ENCODE measurements at regions of chr19 and their contacts with region 1.

Region 1: DNA sequence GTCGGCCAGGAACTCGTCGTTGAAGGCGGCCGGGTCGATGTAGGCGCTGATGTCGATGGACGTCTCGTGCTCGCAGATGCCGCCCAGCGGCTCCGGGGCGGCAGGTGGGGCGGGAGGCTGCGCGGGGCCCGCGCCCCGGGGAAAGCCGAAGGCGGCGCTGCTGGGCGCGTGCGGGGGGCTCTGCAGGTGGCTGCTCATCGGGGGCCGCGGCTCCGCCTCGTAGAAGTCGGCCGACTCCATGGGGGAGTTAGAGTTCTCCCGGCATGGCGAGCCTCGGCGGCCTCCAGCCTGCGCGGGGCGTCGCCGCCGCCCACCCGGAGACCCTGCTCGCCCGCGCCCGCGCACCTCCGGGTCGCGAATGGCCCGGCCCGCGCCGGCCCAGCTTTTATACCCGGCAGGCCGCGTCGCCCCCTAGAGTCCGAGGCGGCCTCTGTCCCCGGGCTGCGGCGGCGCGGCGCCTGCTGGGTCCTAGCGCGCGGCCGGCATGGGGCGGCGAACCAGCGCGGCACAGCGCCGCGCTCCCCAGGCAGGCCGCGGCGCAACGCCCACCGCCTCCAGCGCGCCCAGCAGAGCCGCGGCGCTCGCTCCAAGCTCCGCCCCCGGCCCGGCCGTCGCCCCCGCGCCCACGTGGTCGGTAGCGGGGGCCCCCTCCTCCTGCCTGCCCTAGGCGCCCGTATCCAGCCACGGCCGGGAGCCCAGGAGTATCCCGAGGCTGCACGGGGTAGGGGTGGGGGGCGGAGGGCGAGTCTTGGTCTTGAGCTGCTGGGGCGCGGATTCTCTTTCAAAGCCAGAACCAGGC is at the start of gene CEBPA:
- DNase-seq: peak in 4 of 5 donors; percentile 48 to 61 (median 54)
- H3K4me3 ChIP-seq: peak within 1 kb of the TSS; percentile 6 to 52
- H3K4me3 Mint-ChIP-seq: peak within 1 kb of the TSS in 7 of 8 donors; percentile 55 to 83 (median 68)
- H3K27ac ChIP-seq: no peak within 1 kb of the TSS
- H3K27ac Mint-ChIP-seq: no peak within 1 kb of the TSS
- H3K4me1 ChIP-seq: peaks cover 22% of the 10 kb centered on the region
- H3K4me1 Mint-ChIP-seq: peaks cover 0 to 12% (median 7%) of the 10 kb centered on the region in 4 donors
- H3K27me3 ChIP-seq: peaks cover 7% of the 10 kb centered on the region
- H3K27me3 Mint-ChIP-seq: peaks cover 10 to 14% of the 10 kb centered on the region in 2 donors
- total RNA-seq, gene CEBPA: 2.3 to 2.4 TPM

Region 2: GRCh38 chr19:33373701-33374421 is 71.5 kb after region 1 on chr19 and contains the start of gene CEBPG:
- CTCF ChIA-PET with region 1: interaction called, 4 read pairs
- POLR2A ChIA-PET with region 1: interaction called, 7 read pairs
- intact Hi-C with region 1: loop called (anchors 2 kb)
- DNase-seq: peak in 1 of 5 donors; percentile 73
- H3K4me3 ChIP-seq: peak within 1 kb of the TSS; percentile 66 to 81
- H3K4me3 Mint-ChIP-seq: peak within 1 kb of the TSS; percentile 88 to 96 (median 92)
- H3K27ac ChIP-seq: peak within 1 kb of the TSS; percentile 87
- H3K27ac Mint-ChIP-seq: peak within 1 kb of the TSS; percentile 91 to 96 (median 94)
- H3K4me1 ChIP-seq: peaks cover 42% of the 10 kb centered on the region
- H3K4me1 Mint-ChIP-seq: peaks cover 36 to 59% (median 43%) of the 10 kb centered on the region in 4 donors
- H3K27me3 ChIP-seq: no peaks in the 10 kb centered on the region
- H3K27me3 Mint-ChIP-seq: no peaks in the 10 kb centered on the region
- total RNA-seq, gene CEBPG: 26.9 to 27.2 TPM

Measured in CD4-positive, alpha-beta memory T cell (primary cell).